ENCODE measurements at regions of chr5 and their contacts with region 1.

Region 1: DNA sequence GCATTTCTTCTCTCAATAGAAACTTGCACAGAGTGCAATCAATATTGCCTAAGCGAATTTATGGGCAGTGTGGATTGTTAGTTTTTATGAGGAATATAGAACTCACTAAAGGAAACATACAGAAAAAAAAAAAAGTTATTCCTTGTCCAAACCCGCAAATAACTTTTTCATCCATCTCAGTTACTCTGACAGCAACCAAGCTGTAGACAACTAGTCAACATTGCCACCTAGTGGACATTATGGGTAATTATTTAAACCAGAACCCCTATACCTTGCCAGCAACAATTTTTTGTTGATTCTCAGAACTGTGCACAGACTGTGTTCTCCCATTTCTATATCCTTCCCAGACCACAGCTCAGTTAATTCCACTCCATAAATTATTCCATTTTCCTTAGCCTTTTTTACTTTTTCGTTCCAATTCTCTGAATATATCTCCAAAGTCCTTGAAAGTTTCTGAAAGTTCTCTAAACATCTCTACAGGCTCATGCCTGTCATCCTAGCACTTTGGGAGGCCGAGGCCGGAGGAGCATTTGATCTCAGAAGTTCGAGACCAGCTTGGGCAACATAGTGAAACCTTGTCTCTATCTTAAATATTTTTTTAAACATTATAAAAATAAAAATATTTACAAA is 2.6 kb upstream of the AFAP1L1 start:
- DNase-seq: peak; percentile 47
- H3K4me3 ChIP-seq: no peak overlapping the region
- H3K27ac ChIP-seq: no peak overlapping the region
- H3K4me1 ChIP-seq: peaks cover 14% of the 10 kb centered on the region
- H3K27me3 ChIP-seq: peaks cover 0 to 1% of the 10 kb centered on the region in 2 experiments
- CTCF ChIP-seq: peak; percentile 49 to 57
- POLR2A ChIP-seq: no peak

Region 2: GRCh38 chr5:149128023-149128875 is 140.8 kb before region 1 on chr5:
- CTCF ChIA-PET with region 1: interaction called, 39 read pairs
- POLR2A ChIA-PET with region 1: no interaction called
- dilution Hi-C with region 1: no loop called
- intact Hi-C with region 1: loop called (anchors 1 kb)
- DNase-seq: peak; percentile 16
- H3K4me3 ChIP-seq: no peak overlapping the region
- H3K27ac ChIP-seq: no peak overlapping the region
- H3K4me1 ChIP-seq: peaks cover 12% of the 10 kb centered on the region
- H3K27me3 ChIP-seq: no peaks in the 10 kb centered on the region
- CTCF ChIP-seq: peak; percentile 75 to 80
- POLR2A ChIP-seq: no peak

Region 3: GRCh38 chr5:149228618-149229297 is 40.3 kb before region 1 on chr5:
- CTCF ChIA-PET with region 1: interaction called, 5 read pairs
- POLR2A ChIA-PET with region 1: no interaction called
- dilution Hi-C with region 1: no loop called
- intact Hi-C with region 1: loop called (anchors 2 kb)
- DNase-seq: peak; percentile 84
- H3K4me3 ChIP-seq: no peak overlapping the region
- H3K27ac ChIP-seq: peak overlapping the region; percentile 42
- H3K4me1 ChIP-seq: peaks cover 30% of the 10 kb centered on the region
- H3K27me3 ChIP-seq: no peaks in the 10 kb centered on the region
- CTCF ChIP-seq: peak; percentile 64 to 73
- POLR2A ChIP-seq: no peak

Region 4: GRCh38 chr5:149288436-149288835 is 19.4 kb after region 1 on chr5:
- CTCF ChIA-PET with region 1: interaction called, 12 read pairs
- POLR2A ChIA-PET with region 1: no interaction called
- dilution Hi-C with region 1: no loop called
- intact Hi-C with region 1: loop called (anchors 1 kb)
- DNase-seq: peak; percentile 70
- H3K4me3 ChIP-seq: no peak overlapping the region
- H3K27ac ChIP-seq: peak overlapping the region; percentile 86
- H3K4me1 ChIP-seq: peaks cover 27% of the 10 kb centered on the region
- H3K27me3 ChIP-seq: no peaks in the 10 kb centered on the region
- CTCF ChIP-seq: no peak
- POLR2A ChIP-seq: no peak

Region 5: DNA sequence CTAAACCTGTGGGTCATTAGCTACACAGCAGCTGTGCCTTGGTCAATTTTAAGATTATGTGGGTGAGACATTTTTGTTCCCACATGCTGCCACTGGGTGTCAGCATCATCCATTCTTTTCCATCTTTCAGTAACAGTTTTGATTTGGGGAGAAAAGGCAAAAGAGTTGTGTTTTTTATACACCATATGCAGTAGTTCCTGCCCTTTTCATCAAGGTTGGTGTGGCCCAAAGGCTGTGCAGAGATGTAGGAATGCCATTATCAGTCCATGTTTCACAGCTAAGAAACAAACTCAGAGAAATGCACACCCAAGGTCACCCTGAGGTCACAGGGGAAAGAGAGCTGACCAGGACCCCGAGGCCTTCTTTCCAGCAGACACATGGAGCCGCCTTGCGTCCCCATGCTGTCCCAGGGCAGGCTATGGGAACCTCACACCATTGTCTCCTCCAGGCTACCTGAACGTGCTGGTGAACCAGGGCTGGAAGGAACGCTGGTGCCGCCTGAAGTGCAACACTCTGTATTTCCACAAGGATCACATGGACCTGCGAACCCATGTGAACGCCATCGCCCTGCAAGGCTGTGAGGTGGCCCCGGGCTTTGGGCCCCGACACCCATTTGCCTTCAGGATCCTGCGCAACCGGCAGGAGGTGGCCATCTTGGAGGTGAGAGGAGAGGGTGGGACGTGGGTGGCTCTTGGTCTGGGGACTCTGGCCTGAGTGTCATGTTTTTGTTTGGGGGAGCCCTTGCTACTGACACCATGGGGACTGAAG is 48.4 kb after region 1 on chr5:
- CTCF ChIA-PET with region 1: interaction called, 15 read pairs
- POLR2A ChIA-PET with region 1: interaction called, 5 read pairs
- dilution Hi-C with region 1: no loop called
- intact Hi-C with region 1: no loop called
- DNase-seq: peak; percentile 62
- H3K4me3 ChIP-seq: no peak overlapping the region
- H3K27ac ChIP-seq: no peak overlapping the region
- H3K4me1 ChIP-seq: peaks cover 22% of the 10 kb centered on the region
- H3K27me3 ChIP-seq: no peaks in the 10 kb centered on the region
- CTCF ChIP-seq: peak; percentile 51 to 64
- POLR2A ChIP-seq: no peak

Region 6: GRCh38 chr5:149367249-149367971 is 98.4 kb after region 1 on chr5:
- CTCF ChIA-PET with region 1: interaction called, 81 read pairs
- POLR2A ChIA-PET with region 1: no interaction called
- dilution Hi-C with region 1: no loop called
- intact Hi-C with region 1: loop called (anchors 1 kb)
- DNase-seq: peak; percentile 64
- H3K4me3 ChIP-seq: no peak overlapping the region
- H3K27ac ChIP-seq: no peak overlapping the region
- H3K4me1 ChIP-seq: no peaks in the 10 kb centered on the region
- H3K27me3 ChIP-seq: no peaks in the 10 kb centered on the region
- CTCF ChIP-seq: peak; percentile 76 to 83
- POLR2A ChIP-seq: no peak

Region 7: GRCh38 chr5:149561848-149562247 is 292.8 kb after region 1 on chr5:
- CTCF ChIA-PET with region 1: interaction called, 9 read pairs
- POLR2A ChIA-PET with region 1: no interaction called
- dilution Hi-C with region 1: no loop called
- intact Hi-C with region 1: loop called (anchors 2 kb)
- DNase-seq: peak; percentile 91
- H3K4me3 ChIP-seq: peak overlapping the region in 1 of 3 experiments; percentile 54
- H3K27ac ChIP-seq: peak overlapping the region; percentile 71
- H3K4me1 ChIP-seq: peaks cover 39% of the 10 kb centered on the region
- H3K27me3 ChIP-seq: no peaks in the 10 kb centered on the region
- CTCF ChIP-seq: no peak
- POLR2A ChIP-seq: peak; percentile 37